ENCODE measurements at regions of chr1 and their contacts with region 1.

Region 1: GRCh38 chr1:235079443-235080296 is 49.0 kb downstream of the TOMM20 start:
- DNase-seq: peak; percentile 35
- H3K4me3 ChIP-seq: no peak overlapping the region
- H3K27ac ChIP-seq: peak overlapping the region; percentile 54
- H3K4me1 ChIP-seq: peaks cover 44% of the 10 kb centered on the region
- H3K27me3 ChIP-seq: no peaks in the 10 kb centered on the region

Region 2: GRCh38 chr1:234499119-234499942 is 580.3 kb before region 1 on chr1:
- in situ Hi-C with region 1: loop called (anchors 5 kb)
- DNase-seq: peak; percentile 97
- H3K4me3 ChIP-seq: peak overlapping the region; percentile 61
- H3K27ac ChIP-seq: peak overlapping the region; percentile 99
- H3K4me1 ChIP-seq: peaks cover 47% of the 10 kb centered on the region
- H3K27me3 ChIP-seq: no peaks in the 10 kb centered on the region

Region 3: DNA sequence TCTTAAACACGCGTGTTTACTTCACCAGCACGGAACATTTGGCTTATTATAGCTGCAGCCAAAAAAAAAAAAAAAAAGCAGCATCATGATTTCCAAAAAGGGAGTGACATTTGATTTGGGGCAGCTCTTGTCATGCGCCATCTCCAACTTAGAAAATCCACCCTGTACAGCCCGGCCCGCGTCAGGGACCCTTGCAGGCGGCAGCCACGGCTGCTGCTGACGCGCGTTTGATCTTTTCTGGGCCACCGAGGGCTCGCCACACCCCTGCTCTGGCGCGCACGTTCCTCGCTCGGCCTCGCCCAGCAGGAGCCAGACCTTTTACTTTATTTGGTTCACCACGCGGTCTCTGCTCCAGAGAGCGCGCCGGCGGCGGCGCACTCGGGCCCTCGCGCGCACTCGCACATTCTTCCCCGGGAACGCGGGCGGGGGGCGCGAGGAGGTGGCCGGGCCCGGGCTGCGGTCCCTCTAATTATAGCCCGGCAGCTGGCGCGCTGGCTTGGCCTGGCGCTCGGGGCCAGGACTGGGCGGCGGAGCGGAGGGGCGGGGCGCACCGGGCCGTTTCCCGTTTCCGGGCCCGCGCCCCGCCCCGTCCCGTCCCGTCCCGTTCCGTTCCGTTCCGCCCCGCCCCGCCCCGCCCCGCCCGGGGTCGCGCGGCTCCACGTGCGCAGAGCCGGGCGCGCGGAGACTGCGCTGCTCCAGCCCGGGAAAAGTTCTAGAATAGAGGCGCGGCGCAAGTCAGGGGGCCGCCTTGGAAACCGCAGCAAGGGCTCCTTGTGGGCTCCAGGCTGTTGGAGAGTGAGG is 479.9 kb before region 1 on chr1:
- in situ Hi-C with region 1: loop called (anchors 5 kb)
- DNase-seq: peak; percentile 89
- H3K4me3 ChIP-seq: peak overlapping the region; percentile 94
- H3K27ac ChIP-seq: peak overlapping the region; percentile 93
- H3K4me1 ChIP-seq: peaks cover 53% of the 10 kb centered on the region
- H3K27me3 ChIP-seq: no peaks in the 10 kb centered on the region

Region 4: GRCh38 chr1:234722904-234723720 is 356.6 kb before region 1 on chr1:
- in situ Hi-C with region 1: loop called (anchors 10 kb)
- DNase-seq: peak; percentile 97
- H3K4me3 ChIP-seq: peak overlapping the region; percentile 61
- H3K27ac ChIP-seq: peak overlapping the region; percentile 99
- H3K4me1 ChIP-seq: peaks cover 44% of the 10 kb centered on the region
- H3K27me3 ChIP-seq: no peaks in the 10 kb centered on the region

Region 5: DNA sequence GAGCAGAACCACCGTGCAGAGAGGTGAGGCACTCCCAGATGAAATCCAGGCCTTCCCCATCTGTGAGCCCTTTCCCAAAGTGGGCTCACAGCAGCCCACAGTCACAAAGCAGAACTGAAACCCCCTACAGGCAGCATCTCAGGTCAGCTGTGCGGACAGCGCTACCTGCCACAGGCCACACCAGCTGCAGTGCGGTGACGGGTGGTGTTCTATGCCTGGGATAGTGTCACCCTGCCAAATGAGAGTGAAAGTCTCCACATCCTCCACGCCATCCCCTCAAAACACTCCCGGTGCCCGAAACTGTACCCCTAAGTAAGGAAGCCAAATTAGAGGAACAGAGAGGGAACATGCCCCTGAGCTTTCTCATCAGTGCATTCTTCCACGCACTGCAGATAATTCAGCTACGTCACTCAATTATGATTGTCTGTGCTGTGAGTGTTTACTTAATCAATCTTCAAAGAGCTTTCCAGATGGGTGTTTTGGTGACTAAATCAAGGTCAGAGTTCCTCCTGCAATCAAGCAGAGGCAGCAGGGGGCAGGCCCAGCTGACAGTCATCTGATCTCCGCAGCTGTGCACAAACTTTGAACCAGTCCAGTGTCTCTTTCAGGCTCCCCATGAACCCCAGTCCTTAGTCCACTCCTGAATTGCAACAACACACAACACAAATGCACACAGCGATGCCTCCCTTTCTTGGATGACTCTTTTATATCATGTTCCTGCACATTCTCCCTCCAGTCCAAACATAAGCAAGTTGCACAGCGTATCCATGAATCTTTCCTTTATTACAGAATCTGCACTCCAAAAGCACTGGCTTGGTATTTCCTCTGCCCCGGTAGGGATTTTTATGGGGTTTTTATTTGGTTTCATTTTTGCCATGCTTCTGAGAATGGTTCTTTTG is 101.0 kb before region 1 on chr1:
- in situ Hi-C with region 1: loop called (anchors 10 kb)
- DNase-seq: peak; percentile 72
- H3K4me3 ChIP-seq: 0 out of 2 replicates have a peak overlapping the region, but pooled peaks have one; percentile 0
- H3K27ac ChIP-seq: peak overlapping the region; percentile 99
- H3K4me1 ChIP-seq: peaks cover 62% of the 10 kb centered on the region
- H3K27me3 ChIP-seq: no peaks in the 10 kb centered on the region